ENCODE measurements at regions of chr7 and their contacts with region 1.

Region 1: GRCh38 chr7:106644999-106645398 is 16.0 kb downstream of the CCDC71L start:
- DNase-seq: no peak
- H3K4me3 Mint-ChIP-seq: no peak overlapping the region
- H3K27ac Mint-ChIP-seq: no peak overlapping the region
- H3K4me1 Mint-ChIP-seq: no peaks in the 10 kb centered on the region
- H3K27me3 Mint-ChIP-seq: peaks cover 13% of the 10 kb centered on the region

Region 2: DNA sequence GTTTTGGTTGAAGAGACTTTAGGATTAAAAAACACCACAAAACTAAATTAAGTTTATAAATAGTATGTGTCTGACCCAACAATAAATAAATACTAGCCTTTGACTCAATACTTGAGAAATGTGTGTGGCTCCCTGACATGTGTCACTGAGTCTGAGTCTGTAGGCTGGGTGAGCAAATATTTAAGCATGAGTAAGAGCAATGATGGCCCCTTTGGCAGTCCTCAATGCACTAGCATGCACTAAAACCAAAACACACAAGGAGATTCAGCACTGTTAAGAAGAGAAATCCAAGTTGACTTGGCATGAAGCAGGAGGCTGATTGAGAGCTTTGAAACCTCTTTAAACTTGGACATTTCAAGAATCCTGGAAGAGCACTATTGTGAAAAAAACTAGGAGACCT is 21.1 kb before region 1 on chr7:
- intact Hi-C with region 1: no loop called
- DNase-seq: no peak
- H3K4me3 Mint-ChIP-seq: no peak overlapping the region
- H3K27ac Mint-ChIP-seq: no peak overlapping the region
- H3K4me1 Mint-ChIP-seq: no peaks in the 10 kb centered on the region
- H3K27me3 Mint-ChIP-seq: peaks cover 4% of the 10 kb centered on the region

Region 3: DNA sequence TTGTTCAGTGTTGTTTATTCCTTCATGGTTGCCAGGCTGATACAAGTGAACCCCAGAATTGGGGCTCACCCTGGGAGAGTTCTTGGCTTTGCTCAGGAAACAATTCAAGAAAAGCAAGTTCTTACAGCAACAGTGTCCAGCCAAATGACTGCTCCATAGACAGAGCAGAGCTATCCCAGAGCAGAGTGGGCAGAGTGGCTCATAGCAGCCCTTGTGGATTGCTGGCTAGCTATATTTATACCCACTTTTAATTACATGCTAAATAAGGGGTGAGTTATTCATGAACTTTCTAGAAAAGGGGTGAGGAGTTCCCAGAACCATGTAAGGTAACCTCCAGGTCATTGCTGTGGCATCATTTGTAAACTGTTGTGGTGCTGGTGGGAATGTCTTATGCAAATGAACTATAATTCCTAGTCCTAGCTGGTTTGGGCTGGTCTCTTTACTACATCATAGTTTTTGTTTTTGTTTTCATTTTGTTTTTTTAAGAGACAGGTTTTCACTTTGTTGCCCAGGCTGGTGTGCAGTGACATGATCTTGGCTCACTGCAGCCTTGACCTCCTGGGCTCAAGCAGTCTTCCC is 463.9 kb after region 1 on chr7:
- intact Hi-C with region 1: loop called (anchors 2 kb)
- DNase-seq: no peak
- H3K4me3 Mint-ChIP-seq: no peak overlapping the region
- H3K27ac Mint-ChIP-seq: no peak overlapping the region
- H3K4me1 Mint-ChIP-seq: no peaks in the 10 kb centered on the region
- H3K27me3 Mint-ChIP-seq: peaks cover 6% of the 10 kb centered on the region